ENCODE measurements at regions of chr6 and their contacts with region 1.

Region 1: GRCh38 chr6:29847871-29848630 is 20.4 kb downstream of the HLA-G start:
- DNase-seq: peak; percentile 61 to 95
- H3K4me3 ChIP-seq: no peak overlapping the region
- H3K27ac ChIP-seq: no peak overlapping the region
- H3K4me1 ChIP-seq: no peaks in the 10 kb centered on the region
- H3K27me3 ChIP-seq: no peaks in the 10 kb centered on the region
- CTCF ChIP-seq: peak; percentile 96 to 98 (median 97)
- EP300 ChIP-seq: no peak
- POLR2A ChIP-seq: no peak
- RAD21 ChIP-seq: peak; percentile 100

Region 2: GRCh38 chr6:29865631-29866030 is 17.6 kb after region 1 on chr6:
- CTCF ChIA-PET with region 1: interaction called, 11 read pairs
- POLR2A ChIA-PET with region 1: no interaction called
- DNase-seq: no peak
- H3K4me3 ChIP-seq: no peak overlapping the region
- H3K27ac ChIP-seq: no peak overlapping the region
- H3K4me1 ChIP-seq: no peaks in the 10 kb centered on the region
- H3K27me3 ChIP-seq: peaks cover 0 to 8% (median 0%) of the 10 kb centered on the region in 4 experiments; a peak in 3 of 7 replicates
- CTCF ChIP-seq: no peak
- EP300 ChIP-seq: no peak
- POLR2A ChIP-seq: no peak
- RAD21 ChIP-seq: no peak

Region 3: DNA sequence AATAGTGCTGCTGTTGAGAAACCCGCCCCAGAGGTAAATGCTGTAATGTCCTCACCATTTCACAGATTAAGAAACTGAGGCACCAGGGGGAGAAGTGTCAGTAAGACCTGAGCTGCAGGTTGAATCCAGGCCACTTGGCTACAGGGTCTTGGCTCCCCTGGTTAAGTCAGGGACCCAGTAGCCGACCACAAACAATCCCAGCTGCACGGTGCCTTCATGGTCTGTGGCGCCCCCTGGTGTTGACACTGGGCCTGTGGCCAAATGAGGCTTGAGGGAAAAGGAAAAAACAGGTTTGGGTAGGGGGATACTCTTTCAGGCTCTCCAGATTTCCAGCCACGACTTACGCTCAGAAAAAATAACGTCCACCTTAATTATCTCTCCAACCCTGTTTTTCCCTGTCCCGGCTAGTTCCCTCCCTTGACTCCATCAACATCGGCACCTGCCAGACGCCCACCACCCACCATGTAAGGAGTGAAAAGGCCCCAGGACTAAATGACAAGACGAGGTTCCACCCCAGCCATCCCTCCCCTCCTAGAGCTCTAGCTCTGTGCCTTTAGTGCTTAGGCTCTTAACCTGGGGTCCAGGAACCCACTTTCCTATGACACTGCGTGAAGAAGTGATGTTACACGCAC is 165.4 kb after region 1 on chr6:
- CTCF ChIA-PET with region 1: interaction called, 87 read pairs
- POLR2A ChIA-PET with region 1: no interaction called
- DNase-seq: peak; percentile 31 to 55
- H3K4me3 ChIP-seq: no peak overlapping the region
- H3K27ac ChIP-seq: no peak overlapping the region
- H3K4me1 ChIP-seq: no peaks in the 10 kb centered on the region
- H3K27me3 ChIP-seq: peaks cover 2 to 12% (median 8%) of the 10 kb centered on the region in 4 experiments
- CTCF ChIP-seq: peak; percentile 55 to 86 (median 81)
- EP300 ChIP-seq: no peak
- POLR2A ChIP-seq: no peak
- RAD21 ChIP-seq: peak; percentile 91 to 94

Measured in H1 (cell line).